Right ventricle myocardium superior (tissue), 1 donor: ENCODE measurements at regions of chr1 and their contacts with region 1.

Region 1: DNA sequence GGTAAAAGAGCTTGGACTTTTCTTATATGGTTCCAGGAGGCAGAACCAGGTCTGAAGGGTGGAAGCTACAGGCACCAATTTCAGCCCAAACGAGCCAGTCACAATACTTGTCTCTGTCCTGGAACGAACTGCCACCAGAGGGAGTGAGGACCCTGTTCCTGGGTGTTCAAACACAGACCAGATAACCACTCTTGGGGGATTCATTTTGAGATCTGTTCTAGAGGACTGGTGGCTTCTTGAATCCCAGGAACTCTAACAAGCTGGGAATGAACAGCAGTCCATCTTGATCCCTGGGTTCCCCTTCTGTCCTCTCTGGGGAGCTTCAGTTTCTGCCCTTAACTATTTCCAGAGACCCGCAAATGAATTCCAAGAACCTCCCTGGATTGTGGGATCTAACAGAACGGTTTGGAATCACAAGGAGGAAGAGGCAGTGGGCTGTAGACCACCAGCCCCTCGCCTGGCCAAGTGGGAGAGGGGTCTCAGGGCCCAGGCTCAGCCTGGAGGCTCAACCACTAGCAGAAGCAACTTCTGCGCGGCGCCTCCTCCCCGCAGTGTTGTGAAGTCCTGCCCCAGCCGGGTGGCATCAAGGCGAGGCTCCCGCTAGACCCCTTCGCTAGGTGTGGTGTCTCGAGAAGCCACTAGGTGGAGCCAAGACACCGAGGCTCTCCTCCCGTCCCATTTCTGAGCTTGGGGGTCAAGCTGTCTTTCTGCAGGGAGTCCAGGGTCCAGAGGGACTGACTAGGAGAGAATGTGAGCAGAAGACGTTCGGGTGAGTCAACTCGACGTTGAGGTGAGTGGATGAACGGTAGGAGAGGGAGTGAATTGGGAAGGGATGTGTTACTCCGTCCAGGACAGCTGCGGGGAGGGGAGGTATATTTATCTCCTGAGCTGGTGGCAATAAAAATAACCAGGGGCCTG is 12.1 kb upstream of the NES start:
- DNase-seq: peak; percentile 80
- ATAC-seq: peak; percentile 96

Region 2: DNA sequence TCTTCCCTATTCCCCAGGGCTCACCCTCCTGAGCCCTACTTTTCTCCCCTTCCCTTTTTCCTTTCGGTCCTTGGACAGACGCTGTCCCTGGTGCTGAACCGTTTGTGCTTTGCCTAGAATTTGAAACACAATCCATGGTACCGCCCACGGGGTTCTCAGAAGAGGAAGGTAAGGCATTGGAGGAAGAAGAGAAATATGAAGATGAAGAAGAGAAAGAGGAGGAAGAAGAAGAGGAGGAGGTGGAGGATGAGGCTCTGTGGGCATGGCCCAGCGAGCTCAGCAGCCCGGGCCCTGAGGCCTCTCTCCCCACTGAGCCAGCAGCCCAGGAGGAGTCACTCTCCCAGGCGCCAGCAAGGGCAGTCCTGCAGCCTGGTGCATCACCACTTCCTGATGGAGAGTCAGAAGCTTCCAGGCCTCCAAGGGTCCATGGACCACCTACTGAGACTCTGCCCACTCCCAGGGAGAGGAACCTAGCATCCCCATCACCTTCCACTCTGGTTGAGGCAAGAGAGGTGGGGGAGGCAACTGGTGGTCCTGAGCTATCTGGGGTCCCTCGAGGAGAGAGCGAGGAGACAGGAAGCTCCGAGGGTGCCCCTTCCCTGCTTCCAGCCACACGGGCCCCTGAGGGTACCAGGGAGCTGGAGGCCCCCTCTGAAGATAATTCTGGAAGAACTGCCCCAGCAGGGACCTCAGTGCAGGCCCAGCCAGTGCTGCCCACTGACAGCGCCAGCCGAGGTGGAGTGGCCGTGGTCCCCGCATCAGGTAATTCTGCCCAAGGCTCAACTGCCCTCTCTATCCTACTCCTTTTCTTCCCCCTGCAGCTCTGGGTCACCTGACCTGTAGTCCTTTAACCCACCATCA is 36.9 kb before region 1 on chr1:
- intact Hi-C with region 1: loop called (anchors 5 kb)
- DNase-seq: no peak
- ATAC-seq: no peak

Region 3: GRCh38 chr1:156725683-156726280 is 36.5 kb after region 1 on chr1:
- intact Hi-C with region 1: loop called (anchors 2 kb)
- DNase-seq: peak; percentile 95
- ATAC-seq: peak; percentile 79

Region 4: GRCh38 chr1:156892190-156893047 is 203.1 kb after region 1 on chr1:
- intact Hi-C with region 1: loop called (anchors 10 kb)
- DNase-seq: peak; percentile 96
- ATAC-seq: peak; percentile 90

Region 5: DNA sequence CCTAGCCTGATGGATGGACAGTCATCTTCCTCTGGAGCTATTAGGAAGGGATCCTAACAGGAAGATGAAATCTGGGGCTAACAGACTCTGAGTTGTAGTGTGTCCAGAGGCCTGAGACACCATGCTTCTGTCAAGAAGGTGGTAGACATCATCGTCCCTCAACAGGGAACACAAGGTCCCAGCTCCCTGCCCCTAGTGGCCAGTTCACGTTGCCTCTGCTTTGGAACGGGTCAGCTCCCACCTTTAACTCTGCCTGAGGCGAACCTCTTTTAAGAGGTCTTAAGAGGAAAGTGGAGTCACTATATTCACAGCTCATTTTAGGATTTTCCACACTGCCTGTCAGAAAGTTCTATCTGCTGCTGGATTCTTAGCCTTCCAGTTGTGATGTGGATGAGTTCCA is 259.4 kb after region 1 on chr1:
- intact Hi-C with region 1: no loop called
- DNase-seq: no peak
- ATAC-seq: no peak